ENCODE measurements at regions of chr11 and their contacts with region 1.

Region 1: DNA sequence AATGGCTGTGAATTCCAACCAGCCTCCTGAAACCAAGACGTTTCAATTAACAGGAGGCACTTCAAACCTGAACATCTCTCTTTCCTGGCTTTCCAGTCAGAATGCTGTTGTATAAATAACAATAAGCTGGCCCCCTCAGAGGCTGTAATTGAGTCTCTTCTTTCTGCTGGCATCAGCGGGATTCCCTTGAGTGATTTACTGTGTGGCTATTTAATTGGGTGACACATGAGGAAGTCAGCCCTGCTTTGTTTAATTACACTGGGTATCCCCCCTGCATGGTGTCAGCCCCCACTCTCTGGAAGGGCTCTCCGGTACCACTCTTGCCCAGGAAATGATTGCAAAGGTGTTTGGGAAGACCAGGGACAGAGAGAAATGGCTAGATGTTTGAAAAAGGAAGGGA is 101.6 kb downstream of the NTM start:
- DNase-seq: no peak
- ATAC-seq: no peak
- H3K4me3 ChIP-seq: no peak overlapping the region
- H3K27ac ChIP-seq: no peak overlapping the region
- H3K4me1 ChIP-seq: peaks cover 0 to 7% (median 0%) of the 10 kb centered on the region in 9 donors
- H3K27me3 ChIP-seq: peaks cover 0 to 76% (median 21%) of the 10 kb centered on the region in 7 donors
- CTCF ChIP-seq: no peak

Region 2: DNA sequence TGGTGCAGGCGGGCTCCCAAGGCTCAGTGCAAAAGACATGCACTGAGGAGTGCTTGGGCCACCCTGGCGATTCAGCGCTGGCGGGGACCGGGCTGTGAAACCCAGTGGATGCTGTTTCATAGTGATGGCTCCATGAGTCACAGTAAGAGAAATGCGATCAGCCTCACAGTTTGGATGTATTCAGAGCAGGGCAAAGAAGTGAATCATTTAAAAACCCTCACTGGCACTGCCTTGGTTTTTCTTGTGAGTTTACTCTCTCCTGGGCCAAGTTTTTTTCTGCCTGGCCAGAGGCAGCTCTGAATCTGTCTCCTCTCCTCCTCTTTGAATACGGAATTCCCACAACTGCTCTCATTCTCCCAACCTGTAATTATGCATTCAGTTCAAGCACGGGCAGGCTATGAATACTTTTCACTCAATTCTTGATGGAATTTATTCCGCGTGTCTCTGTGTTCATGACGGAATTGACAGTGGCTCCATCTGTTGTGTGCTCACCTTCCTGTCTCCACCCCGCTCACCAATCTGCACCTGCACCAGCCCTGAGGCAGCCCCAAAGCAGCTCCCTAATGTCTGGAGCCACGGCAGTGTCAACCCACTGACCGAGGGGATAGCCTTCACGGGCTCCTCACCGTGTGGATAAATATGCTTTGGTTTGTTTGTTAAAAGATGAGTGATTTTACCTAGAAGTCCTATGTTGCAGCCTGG is 1058.4 kb before region 1 on chr11:
- intact Hi-C with region 1: loop called in 1 of 10 experiments (anchors 5 kb)
- DNase-seq: no peak
- ATAC-seq: no peak
- H3K4me3 ChIP-seq: no peak overlapping the region
- H3K27ac ChIP-seq: no peak overlapping the region
- H3K4me1 ChIP-seq: peaks cover 0 to 4% (median 0%) of the 10 kb centered on the region in 9 donors
- H3K27me3 ChIP-seq: peaks cover 0 to 5% (median 0%) of the 10 kb centered on the region in 7 donors
- CTCF ChIP-seq: no peak

Region 3: GRCh38 chr11:131955904-131956303 is 483.9 kb after region 1 on chr11:
- intact Hi-C with region 1: no loop called
- DNase-seq: no peak
- ATAC-seq: no peak
- H3K4me3 ChIP-seq: no peak overlapping the region
- H3K27ac ChIP-seq: no peak overlapping the region
- H3K4me1 ChIP-seq: no peaks in the 10 kb centered on the region
- H3K27me3 ChIP-seq: no peaks in the 10 kb centered on the region
- CTCF ChIP-seq: no peak

Measured in heart right ventricle (tissue), 16 donors.